ENCODE measurements at regions of chr3 and their contacts with region 1.

Region 1: GRCh38 chr3:124928333-124929202 is 6.0 kb downstream of the MUC13 start:
- DNase-seq: peak; percentile 29 to 73 (median 59)
- ATAC-seq: peak; percentile 48
- H3K4me3 ChIP-seq: no peak overlapping the region
- H3K4me3 Mint-ChIP-seq: no peak overlapping the region
- H3K27ac ChIP-seq: no peak overlapping the region
- H3K27ac Mint-ChIP-seq: no peak overlapping the region
- H3K4me1 ChIP-seq: no peaks in the 10 kb centered on the region
- H3K4me1 Mint-ChIP-seq: no peaks in the 10 kb centered on the region
- H3K27me3 ChIP-seq: no peaks in the 10 kb centered on the region
- H3K27me3 Mint-ChIP-seq: peaks cover 8% of the 10 kb centered on the region
- CTCF ChIP-seq: peak; percentile 69

Region 2: DNA sequence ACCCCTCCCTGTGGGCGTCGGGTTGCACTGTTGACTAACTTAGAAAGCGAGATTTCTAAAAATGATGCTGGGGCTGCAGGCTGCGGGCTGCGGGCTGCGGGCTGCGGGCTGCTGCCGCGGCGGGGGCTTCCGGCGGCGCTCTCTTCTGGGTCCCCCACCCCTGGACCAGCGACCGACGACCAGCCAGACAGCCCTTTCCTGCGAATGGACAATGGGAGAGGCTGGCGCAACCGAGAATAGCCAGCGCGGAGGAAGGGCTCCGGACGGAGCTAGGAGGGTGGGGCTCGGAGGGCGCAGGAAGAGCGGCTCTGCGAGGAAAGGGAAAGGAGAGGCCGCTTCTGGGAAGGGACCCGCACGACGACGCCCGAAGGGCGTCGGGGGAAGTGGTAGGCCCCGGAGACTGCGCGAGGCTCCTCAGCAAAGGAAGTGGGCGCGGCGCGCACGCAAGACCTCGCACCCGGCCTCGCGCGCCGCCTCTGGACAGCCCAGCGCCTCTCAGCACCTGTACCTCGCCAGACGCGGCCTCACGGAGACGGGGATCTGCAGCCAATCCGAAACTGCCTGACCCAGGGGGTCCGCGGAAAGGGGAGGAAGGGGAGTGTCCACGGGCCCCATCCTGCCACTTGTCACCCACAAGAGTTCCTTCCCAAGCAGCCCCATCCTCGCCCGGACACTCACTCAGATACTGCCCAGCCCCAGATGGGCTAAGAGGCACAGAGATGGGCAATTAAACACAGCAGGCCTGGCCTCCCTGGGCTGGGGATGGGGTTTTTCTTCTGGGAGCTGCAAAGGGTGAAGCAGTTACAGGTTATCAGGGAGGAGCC is 213.2 kb after region 1 on chr3:
- CTCF ChIA-PET with region 1: interaction called, 3 read pairs
- POLR2A ChIA-PET with region 1: no interaction called
- intact Hi-C with region 1: loop called (anchors 1 to 2 kb)
- DNase-seq: peak; percentile 29 to 89 (median 68)
- ATAC-seq: peak; percentile 88
- H3K4me3 ChIP-seq: peak overlapping the region; percentile 41 to 59
- H3K4me3 Mint-ChIP-seq: peak overlapping the region; percentile 75
- H3K27ac ChIP-seq: peak overlapping the region; percentile 12 to 59
- H3K27ac Mint-ChIP-seq: peak overlapping the region; percentile 87
- H3K4me1 ChIP-seq: peaks cover 19% of the 10 kb centered on the region
- H3K4me1 Mint-ChIP-seq: peaks cover 35% of the 10 kb centered on the region
- H3K27me3 ChIP-seq: no peaks in the 10 kb centered on the region
- H3K27me3 Mint-ChIP-seq: no peaks in the 10 kb centered on the region
- CTCF ChIP-seq: peak; percentile 40

Region 3: DNA sequence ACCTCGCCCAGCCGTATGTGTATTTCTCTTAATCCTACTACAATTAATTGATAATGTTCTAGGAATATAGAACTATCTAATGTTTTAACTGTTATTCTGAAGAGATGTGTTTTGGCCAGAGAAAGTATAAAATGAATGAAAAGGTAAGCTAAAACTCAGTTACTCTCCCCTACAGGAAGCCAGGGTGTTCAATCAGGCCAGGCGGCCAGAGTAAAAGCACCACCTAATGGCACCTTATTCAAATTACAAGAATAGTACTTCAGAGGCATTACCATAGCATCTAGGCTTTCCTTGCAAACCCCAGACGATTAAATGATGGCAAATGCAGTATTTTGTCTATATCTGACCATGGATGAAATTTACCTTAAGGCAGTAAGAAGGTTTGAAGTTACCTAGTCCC is 273.6 kb after region 1 on chr3:
- CTCF ChIA-PET with region 1: no interaction called
- POLR2A ChIA-PET with region 1: no interaction called
- intact Hi-C with region 1: loop called (anchors 5 kb)
- DNase-seq: peak in 2 of 9 experiments; percentile 30 to 53
- ATAC-seq: no peak
- H3K4me3 ChIP-seq: no peak overlapping the region
- H3K4me3 Mint-ChIP-seq: no peak overlapping the region
- H3K27ac ChIP-seq: no peak overlapping the region
- H3K27ac Mint-ChIP-seq: no peak overlapping the region
- H3K4me1 ChIP-seq: no peaks in the 10 kb centered on the region
- H3K4me1 Mint-ChIP-seq: no peaks in the 10 kb centered on the region
- H3K27me3 ChIP-seq: no peaks in the 10 kb centered on the region
- H3K27me3 Mint-ChIP-seq: peaks cover 6% of the 10 kb centered on the region
- CTCF ChIP-seq: no peak

Region 4: DNA sequence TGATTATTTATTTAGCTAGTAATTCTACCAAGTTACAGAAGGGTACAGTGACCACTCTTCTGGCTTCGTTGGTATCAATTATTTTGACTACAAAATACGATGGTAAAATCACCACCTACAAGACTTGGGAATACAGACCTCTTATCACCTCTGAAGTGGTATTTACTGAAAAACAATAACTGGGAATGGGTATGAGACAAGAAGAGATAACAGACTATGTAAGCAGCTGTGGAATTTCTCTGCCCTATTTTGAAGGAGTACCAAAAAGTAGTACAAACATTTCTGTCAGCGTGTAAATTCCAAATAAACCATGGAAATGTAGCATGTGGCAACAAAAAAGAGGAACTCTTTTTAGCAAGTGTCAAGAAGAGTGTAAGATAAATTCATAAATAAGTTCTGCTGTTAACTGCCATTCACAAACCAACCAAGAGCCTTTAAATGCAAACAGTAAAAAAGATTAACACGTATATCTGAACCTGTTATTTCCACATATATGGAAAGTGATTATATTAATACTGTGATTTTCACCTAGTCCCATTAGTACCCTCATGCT is 360.9 kb after region 1 on chr3:
- CTCF ChIA-PET with region 1: no interaction called
- POLR2A ChIA-PET with region 1: no interaction called
- intact Hi-C with region 1: no loop called
- DNase-seq: no peak
- ATAC-seq: no peak
- H3K4me3 ChIP-seq: no peak overlapping the region
- H3K4me3 Mint-ChIP-seq: no peak overlapping the region
- H3K27ac ChIP-seq: no peak overlapping the region
- H3K27ac Mint-ChIP-seq: peak overlapping the region; percentile 8
- H3K4me1 ChIP-seq: no peaks in the 10 kb centered on the region
- H3K4me1 Mint-ChIP-seq: peaks cover 58% of the 10 kb centered on the region
- H3K27me3 ChIP-seq: no peaks in the 10 kb centered on the region
- H3K27me3 Mint-ChIP-seq: no peaks in the 10 kb centered on the region
- CTCF ChIP-seq: no peak

Region 5: GRCh38 chr3:125437631-125438435 is 509.3 kb after region 1 on chr3:
- CTCF ChIA-PET with region 1: interaction called, 10 read pairs
- POLR2A ChIA-PET with region 1: no interaction called
- intact Hi-C with region 1: loop called (anchors 1 kb)
- DNase-seq: peak; percentile 31 to 77 (median 64)
- ATAC-seq: peak; percentile 46
- H3K4me3 ChIP-seq: no peak overlapping the region
- H3K4me3 Mint-ChIP-seq: no peak overlapping the region
- H3K27ac ChIP-seq: no peak overlapping the region
- H3K27ac Mint-ChIP-seq: no peak overlapping the region
- H3K4me1 ChIP-seq: no peaks in the 10 kb centered on the region
- H3K4me1 Mint-ChIP-seq: no peaks in the 10 kb centered on the region
- H3K27me3 ChIP-seq: no peaks in the 10 kb centered on the region
- H3K27me3 Mint-ChIP-seq: no peaks in the 10 kb centered on the region
- CTCF ChIP-seq: peak; percentile 99

Region 6: GRCh38 chr3:125585595-125586223 is 657.1 kb after region 1 on chr3:
- CTCF ChIA-PET with region 1: interaction called, 3 read pairs
- POLR2A ChIA-PET with region 1: no interaction called
- intact Hi-C with region 1: loop called in 1 of 2 experiments (anchors 1 kb)
- DNase-seq: peak in 6 of 9 experiments; percentile 24 to 68 (median 40)
- ATAC-seq: peak; percentile 74
- H3K4me3 ChIP-seq: no peak overlapping the region
- H3K4me3 Mint-ChIP-seq: no peak overlapping the region
- H3K27ac ChIP-seq: no peak overlapping the region
- H3K27ac Mint-ChIP-seq: no peak overlapping the region
- H3K4me1 ChIP-seq: peaks cover 5% of the 10 kb centered on the region
- H3K4me1 Mint-ChIP-seq: peaks cover 23% of the 10 kb centered on the region
- H3K27me3 ChIP-seq: no peaks in the 10 kb centered on the region
- H3K27me3 Mint-ChIP-seq: no peaks in the 10 kb centered on the region
- CTCF ChIP-seq: peak; percentile 87

Region 7: GRCh38 chr3:126129181-126129891 is 1200.8 kb after region 1 on chr3:
- CTCF ChIA-PET with region 1: no interaction called
- POLR2A ChIA-PET with region 1: no interaction called
- intact Hi-C with region 1: no loop called
- DNase-seq: peak in 2 of 9 experiments; percentile 1 to 39
- ATAC-seq: no peak
- H3K4me3 ChIP-seq: no peak overlapping the region
- H3K4me3 Mint-ChIP-seq: no peak overlapping the region
- H3K27ac ChIP-seq: no peak overlapping the region
- H3K27ac Mint-ChIP-seq: no peak overlapping the region
- H3K4me1 ChIP-seq: no peaks in the 10 kb centered on the region
- H3K4me1 Mint-ChIP-seq: peaks cover 2% of the 10 kb centered on the region
- H3K27me3 ChIP-seq: no peaks in the 10 kb centered on the region
- H3K27me3 Mint-ChIP-seq: peaks cover 6% of the 10 kb centered on the region
- CTCF ChIP-seq: no peak